ENCODE measurements at regions of chr2 and their contacts with region 1.

Region 1: GRCh38 chr2:101432411-101433181 is 42.3 kb downstream of the RFX8 start:
- DNase-seq: no peak
- H3K4me3 Mint-ChIP-seq: no peak overlapping the region
- H3K27ac Mint-ChIP-seq: no peak overlapping the region
- H3K4me1 Mint-ChIP-seq: no peaks in the 10 kb centered on the region
- H3K27me3 Mint-ChIP-seq: no peaks in the 10 kb centered on the region
- CTCF ChIP-seq: no peak

Region 2: GRCh38 chr2:101474752-101475384 is 42.3 kb after region 1 on chr2 and contains the start of gene RFX8:
- CTCF ChIA-PET with region 1: no interaction called
- POLR2A ChIA-PET with region 1: no interaction called
- intact Hi-C with region 1: loop called (anchors 5 kb)
- DNase-seq: no peak
- H3K4me3 Mint-ChIP-seq: peak within 1 kb of the TSS; percentile 55
- H3K27ac Mint-ChIP-seq: no peak within 1 kb of the TSS
- H3K4me1 Mint-ChIP-seq: no peaks in the 10 kb centered on the region
- H3K27me3 Mint-ChIP-seq: no peaks in the 10 kb centered on the region
- CTCF ChIP-seq: no peak
- total RNA-seq, gene RFX8: not detected in 2 replicates

Region 3: GRCh38 chr2:101619191-101619591 is 186.6 kb after region 1 on chr2:
- CTCF ChIA-PET with region 1: no interaction called
- POLR2A ChIA-PET with region 1: no interaction called
- intact Hi-C with region 1: no loop called
- DNase-seq: peak; percentile 47
- H3K4me3 Mint-ChIP-seq: no peak overlapping the region
- H3K27ac Mint-ChIP-seq: no peak overlapping the region
- H3K4me1 Mint-ChIP-seq: peaks cover 6% of the 10 kb centered on the region
- H3K27me3 Mint-ChIP-seq: no peaks in the 10 kb centered on the region
- CTCF ChIP-seq: no peak

Measured in MCF 10A (cell line).